Activated naive CD4-positive, alpha-beta T cell treated with anti-CD3 and anti-CD28 coated beads for 36 hours (primary cell): ENCODE measurements at regions of chrX and their contacts with region 1.

Region 1: GRCh38 chrX:16946361-16946964 is at the start of gene REPS2:
- DNase-seq: peak; percentile 83
- H3K4me3 Mint-ChIP-seq: peak within 1 kb of the TSS; percentile 71
- H3K27ac Mint-ChIP-seq: no peak within 1 kb of the TSS
- H3K4me1 Mint-ChIP-seq: peaks cover 2% of the 10 kb centered on the region
- H3K27me3 Mint-ChIP-seq: no peaks in the 10 kb centered on the region
- total RNA-seq, gene REPS2: not detected

Region 2: DNA sequence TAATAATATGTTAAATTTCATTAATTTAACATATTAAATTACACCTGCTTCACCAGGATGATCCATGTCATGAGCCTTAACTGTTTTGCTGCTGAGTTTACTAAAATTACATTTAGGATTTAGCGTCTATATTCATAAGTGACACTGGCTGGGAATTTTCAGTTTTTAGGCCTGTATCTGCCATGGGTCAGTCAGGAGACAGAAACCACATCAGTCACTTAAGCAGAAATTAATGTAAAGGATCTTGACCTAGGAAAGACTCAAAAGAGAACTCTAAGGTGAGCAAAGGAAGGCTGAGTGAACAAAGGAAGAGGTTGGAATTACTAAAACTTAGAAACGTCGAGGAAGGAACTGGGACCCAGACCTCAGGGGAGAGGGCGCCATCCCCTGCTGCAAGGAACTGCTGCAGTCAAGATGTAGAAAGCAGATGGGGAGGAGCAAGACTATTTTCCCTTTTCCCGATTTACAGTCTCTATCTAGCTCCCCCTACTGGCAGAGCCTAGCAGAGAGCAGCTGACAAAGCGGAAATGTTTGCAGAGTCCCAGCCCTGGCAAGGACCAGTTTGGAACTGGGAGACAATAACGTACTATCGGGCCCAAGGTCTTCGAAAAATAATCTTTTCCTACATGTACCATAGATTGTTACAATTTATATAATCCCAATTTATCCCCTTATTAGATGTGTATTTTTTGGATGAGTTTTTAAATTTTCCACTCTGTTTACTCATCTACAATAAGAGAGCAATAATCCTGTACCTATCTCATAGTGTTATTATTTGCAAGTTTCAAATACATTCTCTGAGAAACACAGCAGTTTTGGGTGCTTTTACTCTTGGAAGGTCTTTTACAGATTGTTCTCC is 53.7 kb before region 1 on chrX:
- CTCF ChIA-PET with region 1: no interaction called
- intact Hi-C with region 1: loop called (anchors 2 kb)
- DNase-seq: peak; percentile 76
- H3K4me3 Mint-ChIP-seq: no peak overlapping the region
- H3K27ac Mint-ChIP-seq: peak overlapping the region; percentile 46
- H3K4me1 Mint-ChIP-seq: peaks cover 18% of the 10 kb centered on the region
- H3K27me3 Mint-ChIP-seq: no peaks in the 10 kb centered on the region